ENCODE measurements at regions of chr4 and their contacts with region 1.

Region 1: DNA sequence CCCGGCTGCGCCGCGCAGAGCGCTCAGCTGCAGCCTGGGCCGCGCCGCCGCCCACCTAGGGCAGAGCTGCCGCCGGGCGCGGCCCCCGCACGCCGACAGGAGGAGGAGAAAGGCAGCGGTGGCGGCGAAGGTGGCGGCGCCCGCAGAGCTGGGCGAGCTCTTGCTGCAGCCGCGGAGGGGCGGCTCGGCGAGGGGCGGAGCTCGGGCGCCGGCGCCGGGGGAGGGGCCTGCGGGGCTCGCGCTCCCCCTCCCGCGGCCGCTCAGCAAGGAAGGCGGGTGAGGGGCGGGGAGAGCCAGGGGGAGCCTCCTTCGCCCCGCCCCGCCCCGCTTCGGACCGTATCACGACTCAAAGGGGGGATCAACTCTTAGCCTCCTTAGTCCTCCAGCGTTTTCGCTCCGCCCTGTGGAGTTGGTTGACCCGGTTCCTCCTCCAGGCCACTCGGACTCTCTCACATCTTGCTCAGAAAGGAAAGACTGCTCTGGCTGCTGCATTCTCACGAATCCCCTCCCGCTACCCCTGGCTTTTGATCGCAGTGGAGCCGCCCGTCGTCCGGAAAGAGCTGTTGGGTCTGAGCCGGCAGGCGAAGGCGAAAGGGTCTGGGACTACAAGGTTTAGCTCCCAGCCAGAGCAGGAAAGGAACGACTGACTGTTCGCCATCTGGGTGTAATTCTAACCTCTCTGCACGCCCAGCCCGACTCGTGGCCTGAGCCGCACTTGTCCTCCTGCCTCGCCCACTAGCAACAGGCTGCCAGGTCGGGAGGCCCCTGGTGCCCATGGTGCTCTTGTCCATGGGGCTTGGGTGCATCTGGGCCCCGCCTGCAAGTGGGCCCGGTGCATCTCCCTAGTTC is at the start of gene ATP8A1:
- DNase-seq: peak; percentile 90 to 97 (median 93)
- ATAC-seq: peak; percentile 94
- H3K4me3 ChIP-seq: peak within 1 kb of the TSS; percentile 80 to 93
- H3K4me3 Mint-ChIP-seq: peak within 1 kb of the TSS; percentile 97
- H3K27ac ChIP-seq: peak within 1 kb of the TSS; percentile 81 to 95
- H3K27ac Mint-ChIP-seq: peak within 1 kb of the TSS; percentile 99
- H3K4me1 ChIP-seq: peaks cover 34% of the 10 kb centered on the region
- H3K4me1 Mint-ChIP-seq: peaks cover 53% of the 10 kb centered on the region
- H3K27me3 ChIP-seq: no peaks in the 10 kb centered on the region
- H3K27me3 Mint-ChIP-seq: no peaks in the 10 kb centered on the region
- CTCF ChIP-seq: no peak
- total RNA-seq, gene ATP8A1: 130 to 134 TPM

Region 2: GRCh38 chr4:42151568-42152506 is 505.3 kb before region 1 on chr4:
- CTCF ChIA-PET with region 1: no interaction called
- POLR2A ChIA-PET with region 1: no interaction called
- intact Hi-C with region 1: no loop called
- DNase-seq: peak in 6 of 9 experiments; percentile 16 to 56 (median 52)
- ATAC-seq: peak; percentile 61
- H3K4me3 ChIP-seq: peak overlapping the region; percentile 33 to 39
- H3K4me3 Mint-ChIP-seq: peak overlapping the region; percentile 90
- H3K27ac ChIP-seq: no peak overlapping the region
- H3K27ac Mint-ChIP-seq: no peak overlapping the region
- H3K4me1 ChIP-seq: peaks cover 4% of the 10 kb centered on the region
- H3K4me1 Mint-ChIP-seq: peaks cover 20% of the 10 kb centered on the region
- H3K27me3 ChIP-seq: peaks cover 10 to 11% of the 10 kb centered on the region in 2 experiments
- H3K27me3 Mint-ChIP-seq: peaks cover 53% of the 10 kb centered on the region
- CTCF ChIP-seq: no peak

Region 3: GRCh38 chr4:42568610-42569207 is 88.5 kb before region 1 on chr4:
- CTCF ChIA-PET with region 1: interaction called, 11 read pairs
- POLR2A ChIA-PET with region 1: interaction called, 5 read pairs
- intact Hi-C with region 1: loop called in 1 of 2 experiments (anchors 5 kb)
- DNase-seq: peak; percentile 34 to 84 (median 69)
- ATAC-seq: peak; percentile 97
- H3K4me3 ChIP-seq: no peak overlapping the region
- H3K4me3 Mint-ChIP-seq: no peak overlapping the region
- H3K27ac ChIP-seq: no peak overlapping the region
- H3K27ac Mint-ChIP-seq: no peak overlapping the region
- H3K4me1 ChIP-seq: no peaks in the 10 kb centered on the region
- H3K4me1 Mint-ChIP-seq: peaks cover 7% of the 10 kb centered on the region
- H3K27me3 ChIP-seq: no peaks in the 10 kb centered on the region
- H3K27me3 Mint-ChIP-seq: no peaks in the 10 kb centered on the region
- CTCF ChIP-seq: peak; percentile 86

Region 4: GRCh38 chr4:42627885-42628646 is 29.1 kb before region 1 on chr4:
- CTCF ChIA-PET with region 1: interaction called, 18 read pairs
- POLR2A ChIA-PET with region 1: interaction called, 61 read pairs
- intact Hi-C with region 1: loop called (anchors 1 kb)
- DNase-seq: peak; percentile 11 to 93 (median 62)
- ATAC-seq: peak; percentile 91
- H3K4me3 ChIP-seq: peak overlapping the region; percentile 3 to 9
- H3K4me3 Mint-ChIP-seq: peak overlapping the region; percentile 72
- H3K27ac ChIP-seq: peak overlapping the region; percentile 33 to 78
- H3K27ac Mint-ChIP-seq: peak overlapping the region; percentile 98
- H3K4me1 ChIP-seq: peaks cover 70% of the 10 kb centered on the region
- H3K4me1 Mint-ChIP-seq: peaks cover 81% of the 10 kb centered on the region
- H3K27me3 ChIP-seq: no peaks in the 10 kb centered on the region
- H3K27me3 Mint-ChIP-seq: no peaks in the 10 kb centered on the region
- CTCF ChIP-seq: no peak

Region 5: GRCh38 chr4:42643685-42644084 is 13.5 kb before region 1 on chr4:
- CTCF ChIA-PET with region 1: interaction called, 8 read pairs
- POLR2A ChIA-PET with region 1: interaction called, 36 read pairs
- intact Hi-C with region 1: loop called in 1 of 2 experiments (anchors 1 kb)
- DNase-seq: peak in 2 of 9 experiments; percentile 44 to 66
- ATAC-seq: peak; percentile 37
- H3K4me3 ChIP-seq: no peak overlapping the region
- H3K4me3 Mint-ChIP-seq: peak overlapping the region; percentile 30
- H3K27ac ChIP-seq: peak overlapping the region in 1 of 2 experiments; percentile 47
- H3K27ac Mint-ChIP-seq: peak overlapping the region; percentile 16
- H3K4me1 ChIP-seq: peaks cover 93% of the 10 kb centered on the region
- H3K4me1 Mint-ChIP-seq: peaks cover 94% of the 10 kb centered on the region
- H3K27me3 ChIP-seq: no peaks in the 10 kb centered on the region
- H3K27me3 Mint-ChIP-seq: no peaks in the 10 kb centered on the region
- CTCF ChIP-seq: no peak

Region 6: DNA sequence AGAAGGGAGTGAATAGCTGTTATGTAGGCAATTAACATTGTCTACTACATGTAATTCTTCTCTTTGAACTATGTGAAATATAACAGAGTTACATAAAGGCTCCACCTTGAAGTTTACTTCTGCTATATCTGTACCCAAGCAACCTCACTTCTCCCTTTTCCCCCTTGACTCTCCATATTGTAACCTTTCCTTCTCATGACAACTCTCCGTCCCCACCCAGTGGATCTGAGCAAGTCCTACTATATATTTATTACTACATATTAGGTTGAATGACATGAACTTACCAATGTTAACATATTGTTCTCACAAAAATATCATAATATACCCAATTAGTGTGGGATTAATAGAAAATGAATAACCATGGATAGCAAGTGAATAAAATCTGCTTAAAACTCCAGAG is 92.9 kb after region 1 on chr4:
- CTCF ChIA-PET with region 1: interaction called, 25 read pairs
- POLR2A ChIA-PET with region 1: interaction called, 6 read pairs
- intact Hi-C with region 1: loop called in 1 of 2 experiments (anchors 2 kb)
- DNase-seq: peak in 8 of 9 experiments; percentile 2 to 80 (median 48)
- ATAC-seq: peak; percentile 96
- H3K4me3 ChIP-seq: no peak overlapping the region
- H3K4me3 Mint-ChIP-seq: no peak overlapping the region
- H3K27ac ChIP-seq: no peak overlapping the region
- H3K27ac Mint-ChIP-seq: no peak overlapping the region
- H3K4me1 ChIP-seq: no peaks in the 10 kb centered on the region
- H3K4me1 Mint-ChIP-seq: peaks cover 2% of the 10 kb centered on the region
- H3K27me3 ChIP-seq: no peaks in the 10 kb centered on the region
- H3K27me3 Mint-ChIP-seq: no peaks in the 10 kb centered on the region
- CTCF ChIP-seq: peak; percentile 59

Region 7: GRCh38 chr4:43008793-43009192 is 351.6 kb after region 1 on chr4:
- CTCF ChIA-PET with region 1: no interaction called
- POLR2A ChIA-PET with region 1: no interaction called
- intact Hi-C with region 1: no loop called
- DNase-seq: no peak
- ATAC-seq: no peak
- H3K4me3 ChIP-seq: no peak overlapping the region
- H3K4me3 Mint-ChIP-seq: no peak overlapping the region
- H3K27ac ChIP-seq: no peak overlapping the region
- H3K27ac Mint-ChIP-seq: no peak overlapping the region
- H3K4me1 ChIP-seq: no peaks in the 10 kb centered on the region
- H3K4me1 Mint-ChIP-seq: no peaks in the 10 kb centered on the region
- H3K27me3 ChIP-seq: no peaks in the 10 kb centered on the region
- H3K27me3 Mint-ChIP-seq: no peaks in the 10 kb centered on the region
- CTCF ChIP-seq: no peak

Region 8: GRCh38 chr4:43680421-43680820 is 1023.3 kb after region 1 on chr4:
- CTCF ChIA-PET with region 1: no interaction called
- POLR2A ChIA-PET with region 1: no interaction called
- intact Hi-C with region 1: no loop called
- DNase-seq: no peak
- ATAC-seq: no peak
- H3K4me3 ChIP-seq: no peak overlapping the region
- H3K4me3 Mint-ChIP-seq: no peak overlapping the region
- H3K27ac ChIP-seq: no peak overlapping the region
- H3K27ac Mint-ChIP-seq: no peak overlapping the region
- H3K4me1 ChIP-seq: no peaks in the 10 kb centered on the region
- H3K4me1 Mint-ChIP-seq: no peaks in the 10 kb centered on the region
- H3K27me3 ChIP-seq: no peaks in the 10 kb centered on the region
- H3K27me3 Mint-ChIP-seq: no peaks in the 10 kb centered on the region
- CTCF ChIP-seq: no peak